MCF 10A (cell line): ENCODE measurements at regions of chr9 and their contacts with region 1.

Region 1: GRCh38 chr9:6353851-6354686 is 25.9 kb downstream of the TPD52L3 start:
- DNase-seq: peak; percentile 74
- H3K4me3 Mint-ChIP-seq: no peak overlapping the region
- H3K27ac Mint-ChIP-seq: peak overlapping the region; percentile 49
- H3K4me1 Mint-ChIP-seq: peaks cover 25% of the 10 kb centered on the region
- H3K27me3 Mint-ChIP-seq: no peaks in the 10 kb centered on the region
- CTCF ChIP-seq: peak; percentile 79

Region 2: GRCh38 chr9:6412487-6413364 is 58.7 kb after region 1 on chr9 and contains the start of gene UHRF2:
- CTCF ChIA-PET with region 1: interaction called, 11 read pairs
- POLR2A ChIA-PET with region 1: interaction called, 54 read pairs
- intact Hi-C with region 1: loop called (anchors 1 kb)
- DNase-seq: peak; percentile 98
- H3K4me3 Mint-ChIP-seq: peak within 1 kb of the TSS; percentile 81
- H3K27ac Mint-ChIP-seq: peak within 1 kb of the TSS; percentile 87
- H3K4me1 Mint-ChIP-seq: peaks cover 19% of the 10 kb centered on the region
- H3K27me3 Mint-ChIP-seq: no peaks in the 10 kb centered on the region
- CTCF ChIP-seq: no peak
- total RNA-seq, gene UHRF2: 54.6 and 58.3 TPM in 2 replicates

Region 3: GRCh38 chr9:6488395-6488794 is 134.3 kb after region 1 on chr9:
- CTCF ChIA-PET with region 1: interaction called, 3 read pairs
- POLR2A ChIA-PET with region 1: no interaction called
- intact Hi-C with region 1: loop called (anchors 2 kb)
- DNase-seq: no peak
- H3K4me3 Mint-ChIP-seq: no peak overlapping the region
- H3K27ac Mint-ChIP-seq: no peak overlapping the region
- H3K4me1 Mint-ChIP-seq: peaks cover 9% of the 10 kb centered on the region
- H3K27me3 Mint-ChIP-seq: no peaks in the 10 kb centered on the region
- CTCF ChIP-seq: no peak

Region 4: DNA sequence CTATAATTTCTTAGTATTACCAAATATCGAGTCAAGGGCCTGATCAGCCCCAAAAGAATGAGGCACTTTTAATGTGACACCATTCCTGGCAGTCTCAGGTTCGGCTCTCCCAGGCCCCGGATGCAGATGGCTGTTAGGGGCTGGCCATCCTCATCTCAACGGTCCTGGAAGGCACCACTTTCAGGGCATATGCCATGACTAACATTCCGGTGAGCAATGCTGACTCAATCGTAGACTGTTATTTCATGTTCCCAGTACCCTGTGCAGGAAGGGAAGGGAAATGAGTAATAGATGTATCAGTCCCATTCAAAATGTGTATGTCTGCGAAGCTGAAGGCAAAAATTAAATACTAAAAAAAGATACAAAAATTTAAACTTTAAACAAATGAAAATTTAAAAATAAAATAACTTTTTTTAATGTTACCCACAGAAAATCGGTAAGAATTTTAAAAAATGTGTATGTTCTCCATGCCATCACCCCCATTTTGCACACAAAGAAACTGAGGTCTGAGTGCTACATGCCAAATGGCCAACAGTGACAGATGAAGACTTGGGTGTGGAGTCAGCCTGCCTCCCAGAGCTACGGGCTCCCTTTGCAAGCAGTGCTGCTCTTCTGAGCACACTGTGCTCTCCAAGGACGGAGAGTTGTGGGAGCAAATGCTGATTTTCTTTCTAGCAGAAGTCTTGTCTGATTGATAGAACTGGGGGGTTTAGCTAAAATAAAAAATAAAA is 212.5 kb after region 1 on chr9:
- CTCF ChIA-PET with region 1: interaction called, 151 read pairs
- POLR2A ChIA-PET with region 1: interaction called, 49 read pairs
- intact Hi-C with region 1: loop called (anchors 1 kb)
- DNase-seq: peak; percentile 98
- H3K4me3 Mint-ChIP-seq: peak overlapping the region; percentile 64
- H3K27ac Mint-ChIP-seq: peak overlapping the region; percentile 64
- H3K4me1 Mint-ChIP-seq: peaks cover 19% of the 10 kb centered on the region
- H3K27me3 Mint-ChIP-seq: no peaks in the 10 kb centered on the region
- CTCF ChIP-seq: no peak

Region 5: GRCh38 chr9:6575324-6576034 is 221.4 kb after region 1 on chr9:
- CTCF ChIA-PET with region 1: interaction called, 151 read pairs
- POLR2A ChIA-PET with region 1: interaction called, 3 read pairs
- intact Hi-C with region 1: no loop called
- DNase-seq: no peak
- H3K4me3 Mint-ChIP-seq: no peak overlapping the region
- H3K27ac Mint-ChIP-seq: no peak overlapping the region
- H3K4me1 Mint-ChIP-seq: no peaks in the 10 kb centered on the region
- H3K27me3 Mint-ChIP-seq: no peaks in the 10 kb centered on the region
- CTCF ChIP-seq: no peak

Region 6: GRCh38 chr9:6584881-6585597 is 231.0 kb after region 1 on chr9:
- CTCF ChIA-PET with region 1: interaction called, 12 read pairs
- POLR2A ChIA-PET with region 1: no interaction called
- intact Hi-C with region 1: no loop called
- DNase-seq: peak; percentile 40
- H3K4me3 Mint-ChIP-seq: no peak overlapping the region
- H3K27ac Mint-ChIP-seq: no peak overlapping the region
- H3K4me1 Mint-ChIP-seq: no peaks in the 10 kb centered on the region
- H3K27me3 Mint-ChIP-seq: no peaks in the 10 kb centered on the region
- CTCF ChIP-seq: peak; percentile 38

Region 7: DNA sequence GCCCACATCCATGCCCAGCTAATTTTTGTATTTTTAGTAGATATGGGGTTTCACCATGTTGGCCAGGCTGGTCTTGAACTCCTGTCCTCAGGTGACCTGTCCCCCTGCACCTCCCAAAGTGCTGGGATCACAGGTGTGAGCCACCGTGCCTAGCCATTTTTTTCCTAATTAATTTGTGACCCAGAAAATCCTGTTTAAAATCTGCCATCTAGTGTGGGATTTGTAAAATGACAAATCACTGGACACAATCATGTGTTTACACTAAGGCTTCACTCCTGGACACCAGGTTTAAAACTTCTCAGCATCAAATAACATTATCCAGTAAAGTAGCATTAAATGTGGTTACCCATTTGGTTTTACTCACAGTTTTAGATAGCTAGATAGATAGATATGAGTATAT is 385.1 kb after region 1 on chr9:
- CTCF ChIA-PET with region 1: interaction called, 6 read pairs
- POLR2A ChIA-PET with region 1: interaction called, 4 read pairs
- intact Hi-C with region 1: loop called (anchors 2 kb)
- DNase-seq: peak; percentile 41
- H3K4me3 Mint-ChIP-seq: no peak overlapping the region
- H3K27ac Mint-ChIP-seq: no peak overlapping the region
- H3K4me1 Mint-ChIP-seq: no peaks in the 10 kb centered on the region
- H3K27me3 Mint-ChIP-seq: no peaks in the 10 kb centered on the region
- CTCF ChIP-seq: peak; percentile 32